Cardiac septum (tissue), 1 donor: ENCODE measurements at regions of chr19 and their contacts with region 1.

Region 1: DNA sequence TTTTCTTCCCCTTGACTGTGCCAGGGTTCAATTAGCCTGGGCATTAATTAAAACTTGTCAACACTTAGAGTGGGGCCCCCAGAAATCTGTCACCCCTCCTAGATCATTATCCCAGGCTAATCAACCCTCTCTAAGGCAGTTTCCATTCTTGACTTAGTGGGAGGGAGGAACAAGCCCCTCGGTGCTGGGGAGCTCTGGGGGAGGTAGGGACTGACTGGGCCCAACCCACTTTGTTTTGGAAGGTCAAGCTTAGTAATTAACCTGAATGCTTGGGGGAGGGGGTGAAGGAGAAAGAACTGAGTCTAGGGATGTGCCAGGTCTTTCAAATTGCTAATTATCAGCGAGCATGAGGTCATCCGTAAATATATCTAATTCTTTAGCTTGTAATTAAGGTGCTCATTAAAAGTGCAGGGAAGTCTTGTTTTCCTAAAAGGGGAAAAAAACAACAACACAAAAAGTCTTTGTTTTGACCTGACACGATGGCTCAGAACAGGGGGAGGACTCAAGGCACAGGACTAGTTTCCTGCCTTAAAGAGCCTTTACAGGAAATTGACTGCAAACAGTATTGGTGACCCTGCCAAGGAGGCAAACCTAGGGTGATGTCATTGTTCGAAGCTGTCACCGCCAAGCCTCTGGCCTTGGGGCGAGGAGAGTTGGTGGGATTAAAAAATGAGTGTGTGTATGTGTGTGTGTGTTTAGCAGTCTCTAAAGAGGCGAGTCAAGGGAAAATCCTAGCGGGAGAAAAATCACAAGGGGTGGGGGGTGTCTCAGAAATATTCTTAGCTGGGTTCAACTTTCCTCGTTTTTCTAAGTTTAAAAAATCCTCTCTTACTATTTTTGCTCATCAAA is 19.4 kb downstream of the ACTN4 start:
- DNase-seq: no peak

Region 2: DNA sequence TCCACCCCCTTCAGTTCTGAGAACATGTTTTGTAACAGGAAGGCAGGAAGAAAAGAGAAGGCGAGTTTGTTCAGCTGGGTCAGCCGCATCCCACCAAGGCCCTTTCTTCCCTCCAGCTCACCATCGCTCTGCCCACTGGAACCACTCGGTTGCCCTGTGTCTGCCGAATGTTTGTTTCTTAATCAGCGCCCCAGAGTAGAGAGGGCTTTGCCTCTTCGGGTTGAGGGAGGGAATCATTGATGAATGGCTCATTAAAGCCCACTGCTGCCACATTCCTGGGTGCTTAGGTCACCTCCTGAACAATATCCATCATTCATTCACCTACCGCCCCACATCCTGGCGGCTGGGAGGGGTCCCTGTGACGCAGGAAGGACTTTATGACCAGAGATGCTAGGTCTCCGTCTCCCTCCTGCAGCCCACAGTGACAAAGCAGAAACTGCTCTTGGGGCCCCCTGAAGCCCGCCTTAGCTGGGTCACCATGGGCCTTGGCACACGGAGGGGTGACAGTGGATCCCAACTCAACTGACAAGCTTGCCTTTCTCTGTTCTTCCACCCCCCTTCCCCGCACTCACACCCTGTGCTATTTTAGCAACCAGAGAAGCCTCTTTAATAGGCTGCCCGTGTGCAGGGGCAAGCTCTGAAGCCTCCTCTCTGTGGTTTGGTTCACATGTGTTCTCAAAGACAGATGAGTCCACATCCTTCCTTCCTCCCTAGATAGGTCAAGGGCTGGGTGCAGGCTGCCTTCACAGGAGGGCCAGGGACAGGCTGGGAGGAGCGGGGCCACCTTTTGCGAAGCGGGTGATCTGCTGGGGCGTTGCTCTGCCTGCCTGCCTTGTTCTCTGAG is 26.7 kb after region 1 on chr19:
- intact Hi-C with region 1: loop called (anchors 2 kb)
- DNase-seq: peak; percentile 77

Region 3: GRCh38 chr19:38707512-38708114 is 40.7 kb after region 1 on chr19:
- intact Hi-C with region 1: loop called (anchors 5 kb)
- DNase-seq: peak; percentile 89